ENCODE measurements at regions of chr6 and their contacts with region 1.

Region 1: DNA sequence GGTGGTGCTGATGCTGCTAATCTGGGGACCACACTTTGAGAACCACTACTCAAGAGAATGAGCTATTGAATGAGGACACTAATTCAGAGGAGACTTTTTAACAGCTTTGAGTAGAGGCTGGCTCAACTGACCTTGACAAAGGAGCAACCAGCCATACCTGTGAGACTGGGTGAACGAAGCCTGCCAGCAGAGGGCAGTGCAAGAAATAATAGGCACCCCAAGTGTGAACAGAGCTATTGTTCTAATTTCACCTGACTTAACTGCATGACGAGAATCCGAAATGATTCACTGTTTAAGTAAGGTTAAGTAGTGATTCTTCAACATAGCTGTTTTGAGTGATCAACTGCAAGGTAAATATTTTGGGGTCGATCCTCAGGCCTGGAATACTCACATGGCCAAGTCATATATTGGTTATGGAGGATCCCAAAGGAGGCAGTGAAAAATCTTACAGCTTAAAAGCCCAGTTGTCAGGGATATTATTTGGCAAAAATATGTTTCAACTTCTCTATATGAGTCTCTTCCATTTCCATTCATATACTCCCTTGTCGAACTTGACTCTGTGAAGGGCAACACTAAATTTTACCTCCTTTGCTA is 550.5 kb upstream of the MARCKS start:
- DNase-seq: peak; percentile 35
- CTCF ChIP-seq: peak; percentile 71

Region 2: DNA sequence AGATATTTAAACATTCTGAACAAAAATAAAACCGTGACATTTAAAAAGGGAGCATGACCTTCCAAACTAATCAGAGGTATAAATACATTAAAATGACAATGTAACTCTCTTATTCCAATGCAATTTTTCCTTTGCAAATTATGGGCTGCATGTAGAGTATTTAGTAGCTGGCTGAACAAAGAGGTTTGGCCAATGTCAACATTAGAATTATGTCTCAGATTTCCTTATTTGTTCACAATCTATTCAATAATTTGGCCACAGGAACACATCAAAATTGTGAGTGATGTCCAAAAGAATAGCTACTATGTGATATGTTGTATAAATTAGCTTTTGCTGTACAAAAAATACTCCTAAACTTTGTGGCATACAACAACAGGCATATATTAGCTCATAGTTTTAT is 29.5 kb before region 1 on chr6:
- CTCF ChIA-PET with region 1: interaction called, 15 read pairs
- POLR2A ChIA-PET with region 1: no interaction called
- DNase-seq: no peak
- CTCF ChIP-seq: no peak

Region 3: GRCh38 chr6:113317881-113318574 is 11.4 kb after region 1 on chr6:
- CTCF ChIA-PET with region 1: interaction called, 46 read pairs
- POLR2A ChIA-PET with region 1: no interaction called
- DNase-seq: no peak
- CTCF ChIP-seq: no peak

Region 4: DNA sequence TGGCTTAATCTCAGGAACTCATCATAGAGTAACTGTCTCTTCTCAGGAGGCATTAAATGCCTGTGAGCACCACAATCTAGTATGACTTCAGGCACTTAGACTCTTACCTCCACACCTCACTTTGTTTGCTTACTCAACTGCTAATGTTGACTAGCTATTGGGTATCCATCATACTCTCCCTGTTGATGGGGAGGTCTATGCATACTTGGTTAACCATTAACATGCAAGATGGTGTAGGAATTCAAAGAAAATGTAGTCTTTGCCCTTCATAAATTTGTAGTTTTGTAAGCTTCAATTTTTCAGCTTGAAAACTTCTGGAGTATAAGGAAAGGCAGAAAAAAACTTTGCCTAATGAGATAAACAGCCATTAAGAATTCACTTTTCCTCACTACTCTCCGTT is 49.5 kb after region 1 on chr6:
- CTCF ChIA-PET with region 1: no interaction called
- POLR2A ChIA-PET with region 1: no interaction called
- DNase-seq: no peak
- CTCF ChIP-seq: no peak

Region 5: GRCh38 chr6:113397236-113397635 is 90.6 kb after region 1 on chr6:
- CTCF ChIA-PET with region 1: no interaction called
- POLR2A ChIA-PET with region 1: no interaction called
- DNase-seq: no peak
- CTCF ChIP-seq: no peak

Region 6: DNA sequence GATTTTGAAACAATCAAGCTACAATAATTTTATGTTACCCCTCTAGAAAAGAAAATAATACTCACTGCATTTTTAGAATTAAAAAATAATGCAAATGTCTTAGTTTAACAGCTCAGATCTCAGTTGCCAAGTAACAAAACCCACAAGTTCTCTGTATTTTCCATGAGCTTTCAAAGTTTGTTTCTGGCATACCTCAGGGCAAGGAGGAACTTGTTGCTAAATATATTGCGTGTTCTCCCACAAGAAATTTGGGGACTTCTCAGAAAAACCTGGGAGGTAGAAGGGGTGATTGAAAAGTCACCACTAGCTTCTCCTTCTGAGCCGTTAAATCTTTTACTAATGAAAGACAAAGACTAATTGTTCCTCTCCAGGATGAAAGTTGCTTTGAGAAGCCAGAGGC is 313.7 kb after region 1 on chr6:
- CTCF ChIA-PET with region 1: interaction called, 15 read pairs
- POLR2A ChIA-PET with region 1: no interaction called
- DNase-seq: no peak
- CTCF ChIP-seq: no peak

Region 7: DNA sequence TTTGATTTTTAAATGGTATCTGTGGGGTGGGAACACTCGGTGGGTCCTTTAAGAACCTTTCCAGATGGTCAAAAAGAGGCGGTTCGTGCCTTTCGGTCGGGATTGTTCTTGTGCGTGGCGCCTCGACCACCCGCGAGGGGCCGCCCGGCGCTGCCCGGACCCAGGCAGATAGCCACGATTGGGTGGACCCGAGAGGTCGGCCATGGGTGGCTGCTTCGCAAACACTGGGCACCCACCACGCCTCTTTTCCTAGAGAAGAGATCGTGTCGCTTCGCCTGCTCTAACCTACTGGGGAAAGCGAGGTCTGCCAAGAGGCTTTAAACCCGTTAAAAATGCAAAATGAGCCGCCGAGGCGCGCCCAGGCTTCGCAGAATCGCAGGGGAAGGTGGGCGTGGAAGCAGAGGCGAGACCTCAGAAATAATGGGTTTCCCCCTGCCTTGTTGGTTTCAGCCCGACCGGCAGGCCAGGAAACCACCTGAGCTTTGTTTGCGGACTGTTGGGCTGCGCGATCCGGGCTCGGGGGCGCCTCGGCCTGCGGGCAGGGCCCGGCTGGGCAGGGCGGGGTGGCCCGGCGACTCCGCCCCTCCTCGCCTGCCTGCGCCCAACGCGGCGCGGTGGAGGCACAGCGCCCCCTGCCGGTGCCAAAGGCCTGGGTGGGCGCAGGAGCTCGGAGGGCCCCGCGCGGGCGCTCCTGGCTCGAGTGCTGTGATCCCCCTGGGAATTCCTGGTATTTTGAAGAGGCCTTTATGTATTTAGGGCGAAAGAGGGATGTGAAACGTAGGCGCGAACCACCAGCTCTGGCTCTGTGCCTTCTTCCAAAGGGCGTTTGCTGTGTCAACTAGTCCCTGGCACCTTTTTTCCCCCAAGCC is 552.1 kb after region 1 on chr6:
- CTCF ChIA-PET with region 1: interaction called, 74 read pairs
- POLR2A ChIA-PET with region 1: interaction called, 3 read pairs
- DNase-seq: peak; percentile 95
- CTCF ChIP-seq: peak; percentile 93

Region 8: DNA sequence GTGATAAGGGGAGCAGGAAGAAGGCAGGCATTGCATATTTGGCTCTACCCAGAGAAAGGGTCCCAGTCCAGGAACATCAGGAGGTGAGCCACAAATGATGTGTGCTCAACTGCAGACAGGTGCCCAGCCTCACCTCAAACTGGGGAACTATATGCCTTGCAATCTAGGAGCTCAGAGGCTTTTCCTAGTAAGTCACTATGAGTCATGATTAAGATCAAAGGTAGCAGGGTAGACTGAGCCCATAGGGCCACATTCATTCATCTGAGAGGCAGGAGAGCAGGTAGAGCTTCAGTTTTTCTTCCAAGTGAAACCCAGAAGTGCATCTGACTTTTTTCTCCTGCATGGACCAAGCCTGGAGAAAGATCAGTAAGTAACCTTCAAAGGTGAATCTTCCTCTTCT is 581.8 kb after region 1 on chr6:
- CTCF ChIA-PET with region 1: interaction called, 10 read pairs
- POLR2A ChIA-PET with region 1: no interaction called
- DNase-seq: no peak
- CTCF ChIP-seq: no peak

Measured in GM10248 (cell line).